A549 (cell line): ENCODE measurements at regions of chr17 and their contacts with region 1.

Region 1: DNA sequence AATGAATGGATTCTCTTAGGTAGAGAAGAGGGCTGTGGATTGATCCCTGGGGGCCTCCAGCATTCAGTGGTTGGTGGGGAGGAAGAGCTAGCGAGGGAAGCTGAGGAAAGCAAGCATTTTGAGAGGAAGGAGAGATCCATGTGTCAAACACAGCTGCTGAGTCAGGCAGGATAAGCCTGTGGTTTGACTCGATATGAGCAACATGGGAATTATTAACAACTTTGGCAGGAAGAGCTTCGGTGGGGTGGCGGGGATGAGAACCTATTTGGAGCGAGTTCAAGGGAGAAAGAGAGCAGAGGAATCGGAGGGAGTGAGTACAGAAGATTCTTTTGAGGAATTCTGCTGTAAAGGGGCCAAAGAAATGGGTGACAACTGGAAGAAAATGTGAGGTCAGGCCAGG is 59.5 kb upstream of the CDC42EP4 start:
- DNase-seq: peak in 1 of 2 experiments; percentile 44
- ATAC-seq: no peak
- H3K4me3 ChIP-seq: no peak overlapping the region
- H3K27ac ChIP-seq: no peak overlapping the region
- H3K4me1 ChIP-seq: 0 out of 3 replicates have a peak, but pooled peaks cover 7% of the 10 kb centered on the region
- CTCF ChIP-seq: no peak
- EP300 ChIP-seq: no peak
- POLR2A ChIP-seq: no peak
- RAD21 ChIP-seq: no peak

Region 2: DNA sequence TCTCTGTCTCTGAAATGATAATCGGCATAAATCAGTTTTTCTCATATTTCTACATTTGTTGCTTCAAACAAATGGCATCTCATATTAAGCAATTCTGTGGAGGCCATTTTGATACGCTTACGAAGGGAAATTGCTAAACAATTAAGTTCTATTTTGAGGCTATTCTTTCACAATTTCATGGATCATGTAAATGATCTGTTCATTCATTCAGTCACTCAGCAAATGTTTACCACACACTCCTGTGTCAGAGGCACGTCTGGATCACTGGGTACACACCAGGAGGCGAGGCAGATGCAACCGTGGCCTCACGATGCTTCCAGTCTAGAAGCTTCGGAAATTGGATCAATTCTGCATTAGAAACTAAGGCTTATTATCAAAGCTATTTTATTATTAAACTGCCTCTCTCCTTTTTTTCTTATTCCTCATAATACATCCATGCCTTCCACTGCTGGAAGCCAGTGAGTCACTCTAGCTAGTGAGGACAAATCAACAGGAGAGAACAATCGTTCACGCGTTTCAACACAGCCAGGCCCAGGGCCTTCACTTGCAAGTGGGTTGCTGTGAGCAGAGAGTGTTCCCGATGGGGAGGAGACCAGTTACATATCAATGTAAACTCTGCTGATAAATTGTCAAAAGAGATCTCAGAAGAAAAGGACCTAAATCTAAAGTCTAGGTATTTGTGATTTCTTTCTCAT is 267.5 kb before region 1 on chr17:
- CTCF ChIA-PET with region 1: no interaction called
- POLR2A ChIA-PET with region 1: no interaction called
- DNase-seq: no peak
- ATAC-seq: no peak
- H3K4me3 ChIP-seq: no peak overlapping the region
- H3K27ac ChIP-seq: no peak overlapping the region
- H3K4me1 ChIP-seq: no peaks in the 10 kb centered on the region
- CTCF ChIP-seq: no peak
- EP300 ChIP-seq: no peak
- POLR2A ChIP-seq: no peak
- RAD21 ChIP-seq: no peak

Region 3: DNA sequence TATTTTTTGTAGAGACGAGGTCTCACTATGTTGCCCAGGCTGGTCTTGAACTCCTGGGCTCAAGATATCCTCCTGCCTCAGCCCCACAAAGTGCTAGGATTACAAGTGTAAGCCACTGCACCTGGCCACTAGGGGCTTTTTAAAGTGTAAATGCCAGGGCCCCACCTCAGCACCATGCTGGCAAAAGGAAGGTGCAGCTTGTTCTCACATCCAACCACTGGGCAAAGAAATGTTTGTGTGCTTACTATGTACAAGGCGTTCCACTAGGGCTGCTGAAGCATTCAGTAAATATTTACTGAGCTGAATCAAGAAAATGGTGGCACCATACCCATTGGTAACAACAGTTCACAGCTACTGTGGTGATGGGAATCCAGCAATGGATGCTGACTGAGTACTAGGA is 155.8 kb before region 1 on chr17:
- CTCF ChIA-PET with region 1: interaction called, 10 read pairs
- POLR2A ChIA-PET with region 1: no interaction called
- DNase-seq: peak in 1 of 2 experiments; percentile 51
- ATAC-seq: peak; percentile 62 to 82
- H3K4me3 ChIP-seq: no peak overlapping the region
- H3K27ac ChIP-seq: peak overlapping the region in 1 of 2 experiments; percentile 25; a peak in 1 of 6 replicates
- H3K4me1 ChIP-seq: peaks cover 9% of the 10 kb centered on the region; the same call in 1 of the 3 replicates
- CTCF ChIP-seq: no peak; the same call in 2 of the 3 replicates
- EP300 ChIP-seq: no peak
- POLR2A ChIP-seq: no peak
- RAD21 ChIP-seq: no peak

Region 4: GRCh38 chr17:73247726-73248125 is 123.6 kb before region 1 on chr17:
- CTCF ChIA-PET with region 1: interaction called, 975 read pairs
- POLR2A ChIA-PET with region 1: no interaction called
- DNase-seq: peak in 1 of 2 experiments; percentile 32
- ATAC-seq: peak in 1 of 2 experiments; percentile 41; a peak in 1 of 6 replicates
- H3K4me3 ChIP-seq: no peak overlapping the region
- H3K27ac ChIP-seq: no peak overlapping the region
- H3K4me1 ChIP-seq: no peaks in the 10 kb centered on the region
- CTCF ChIP-seq: peak; percentile 47
- EP300 ChIP-seq: no peak
- POLR2A ChIP-seq: no peak
- RAD21 ChIP-seq: peak; percentile 38; a peak in 3 of 5 replicates

Region 5: DNA sequence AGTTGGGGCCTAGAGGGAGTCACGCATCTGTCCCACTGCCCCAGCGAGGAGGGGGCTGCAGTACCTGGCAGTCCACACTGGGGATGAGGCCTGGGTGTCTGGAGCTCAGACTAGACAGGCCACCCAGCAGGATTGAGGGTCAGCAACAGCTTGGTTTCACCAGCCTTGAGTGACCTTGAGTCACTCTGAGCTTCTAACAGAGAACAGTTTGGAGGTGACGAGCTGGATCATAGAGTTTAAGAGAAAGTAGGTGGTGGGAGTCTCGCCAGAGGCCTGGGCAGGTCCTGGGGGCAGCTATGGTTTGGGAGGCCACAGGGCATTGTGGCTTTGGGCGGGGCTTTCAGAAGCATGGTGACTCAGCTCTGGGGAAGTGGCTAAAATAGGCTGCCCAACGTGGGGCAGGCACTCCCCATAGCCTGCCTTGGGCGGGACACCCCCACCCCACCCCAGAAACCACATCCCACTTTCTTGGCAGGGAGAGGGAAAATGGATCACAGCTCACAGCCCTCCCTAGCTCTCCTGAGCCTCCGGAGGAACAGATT is 80.0 kb before region 1 on chr17:
- CTCF ChIA-PET with region 1: interaction called, 385 read pairs
- POLR2A ChIA-PET with region 1: no interaction called
- DNase-seq: peak; percentile 59 to 65
- ATAC-seq: peak; percentile 47 to 65; a peak in 5 of 6 replicates
- H3K4me3 ChIP-seq: 0 out of 3 replicates have a peak overlapping the region, but pooled peaks have one; percentile 6
- H3K27ac ChIP-seq: peak overlapping the region; percentile 82 to 91
- H3K4me1 ChIP-seq: peaks cover 87% of the 10 kb centered on the region
- CTCF ChIP-seq: no peak
- EP300 ChIP-seq: no peak
- POLR2A ChIP-seq: no peak
- RAD21 ChIP-seq: no peak

Region 6: GRCh38 chr17:73342050-73342522 is 29.2 kb before region 1 on chr17:
- CTCF ChIA-PET with region 1: interaction called, 65 read pairs
- POLR2A ChIA-PET with region 1: no interaction called
- DNase-seq: peak; percentile 93
- ATAC-seq: peak; percentile 71 to 80
- H3K4me3 ChIP-seq: no peak overlapping the region
- H3K27ac ChIP-seq: peak overlapping the region; percentile 86 to 93
- H3K4me1 ChIP-seq: peaks cover 55% of the 10 kb centered on the region
- CTCF ChIP-seq: no peak
- EP300 ChIP-seq: peak in 1 of 2 experiments; percentile 54; a peak in 1 of 5 replicates
- POLR2A ChIP-seq: no peak
- RAD21 ChIP-seq: no peak

Region 7: DNA sequence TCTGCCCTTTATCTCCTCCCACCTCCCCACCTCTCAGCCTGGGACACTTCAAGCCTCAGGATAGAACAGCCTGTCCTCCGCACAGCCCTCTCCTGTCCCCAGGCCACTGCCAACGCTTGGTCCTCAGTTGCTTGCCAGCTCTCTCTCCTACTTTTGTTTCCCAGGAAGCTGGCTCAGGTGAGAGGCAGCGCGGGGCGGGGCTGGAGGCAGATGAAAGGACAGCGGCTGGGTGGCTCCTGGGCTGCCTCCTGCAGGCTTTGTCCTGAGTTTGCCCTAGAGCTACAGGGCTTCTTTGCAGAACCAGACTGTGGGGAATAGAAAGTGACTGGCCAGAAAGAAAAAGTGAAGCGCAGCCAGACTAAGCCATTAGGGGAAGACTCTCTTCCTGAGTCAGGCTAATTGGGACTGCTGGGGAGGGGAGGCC is 11.3 kb before region 1 on chr17:
- CTCF ChIA-PET with region 1: interaction called, 81 read pairs
- POLR2A ChIA-PET with region 1: no interaction called
- DNase-seq: no peak
- ATAC-seq: peak; percentile 16 to 18; a peak in 3 of 6 replicates
- H3K4me3 ChIP-seq: no peak overlapping the region
- H3K27ac ChIP-seq: peak overlapping the region in 1 of 2 experiments; percentile 1; a peak in 4 of 6 replicates
- H3K4me1 ChIP-seq: peaks cover 28% of the 10 kb centered on the region
- CTCF ChIP-seq: no peak
- EP300 ChIP-seq: no peak
- POLR2A ChIP-seq: no peak
- RAD21 ChIP-seq: no peak

Region 8: GRCh38 chr17:73420895-73421294 is 49.6 kb after region 1 on chr17:
- CTCF ChIA-PET with region 1: interaction called, 10 read pairs
- POLR2A ChIA-PET with region 1: no interaction called
- DNase-seq: peak; percentile 65 to 86
- ATAC-seq: peak; percentile 94 to 97
- H3K4me3 ChIP-seq: no peak overlapping the region
- H3K27ac ChIP-seq: no peak overlapping the region
- H3K4me1 ChIP-seq: no peaks in the 10 kb centered on the region
- CTCF ChIP-seq: 0 out of 3 replicates have a peak, but pooled peaks have one; percentile 16
- EP300 ChIP-seq: no peak
- POLR2A ChIP-seq: no peak
- RAD21 ChIP-seq: peak; percentile 23 to 48; a peak in 2 of 5 replicates

Region 9: DNA sequence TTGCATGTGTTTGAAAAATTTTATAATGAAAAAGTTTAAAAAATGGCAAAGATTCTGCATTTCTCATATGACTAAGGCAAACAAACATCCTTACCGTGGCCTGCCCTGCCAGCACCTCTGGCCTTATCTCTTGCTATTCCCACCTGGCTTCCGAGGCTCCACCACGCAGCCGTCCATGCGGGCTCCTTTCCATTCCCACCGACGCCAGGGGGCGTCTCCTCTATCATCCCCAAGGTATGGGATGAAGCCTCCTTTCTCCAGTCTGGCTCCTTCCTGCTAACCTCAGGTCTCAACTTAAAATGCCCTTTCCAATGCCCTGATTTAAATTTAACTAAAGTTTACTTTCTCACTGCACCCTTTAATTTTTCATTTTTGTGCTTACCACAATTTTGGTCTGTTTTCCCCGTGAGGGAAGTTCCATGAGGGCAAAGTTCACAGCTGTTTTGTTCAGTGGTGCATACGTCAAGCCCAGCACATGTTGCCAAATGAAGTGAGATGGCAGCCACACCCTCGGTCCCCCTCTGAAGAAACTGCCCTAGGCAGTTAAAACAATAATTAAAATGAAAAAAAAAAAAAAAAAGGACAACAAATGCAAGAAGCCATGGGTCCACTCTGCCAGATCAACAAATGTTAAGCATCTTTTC is 286.3 kb after region 1 on chr17:
- CTCF ChIA-PET with region 1: no interaction called
- POLR2A ChIA-PET with region 1: no interaction called
- DNase-seq: peak; percentile 70 to 72
- ATAC-seq: peak; percentile 94 to 99
- H3K4me3 ChIP-seq: no peak overlapping the region
- H3K27ac ChIP-seq: peak overlapping the region; percentile 12 to 27; a peak in 2 of 6 replicates
- H3K4me1 ChIP-seq: peaks cover 8% of the 10 kb centered on the region; the same call in 1 of the 3 replicates
- CTCF ChIP-seq: peak; percentile 85
- EP300 ChIP-seq: no peak
- POLR2A ChIP-seq: no peak
- RAD21 ChIP-seq: peak; percentile 77 to 79